ENCODE measurements at regions of chr6 and their contacts with region 1.

Region 1: GRCh38 chr6:125956506-125957390 is at the start of gene HINT3:
- DNase-seq: peak; percentile 96 to 98
- H3K4me3 ChIP-seq: peak within 1 kb of the TSS; percentile 99
- H3K4me3 Mint-ChIP-seq: no peak within 1 kb of the TSS
- H3K27ac Mint-ChIP-seq: peak within 1 kb of the TSS; percentile 59
- H3K4me1 ChIP-seq: peaks cover 7% of the 10 kb centered on the region
- H3K4me1 Mint-ChIP-seq: peaks cover 14% of the 10 kb centered on the region
- H3K27me3 ChIP-seq: no peaks in the 10 kb centered on the region
- H3K27me3 Mint-ChIP-seq: no peaks in the 10 kb centered on the region
- CTCF ChIP-seq: peak; percentile 93 to 95
- total RNA-seq, gene HINT3: 20.2 and 24.6 TPM in 2 replicates

Region 2: DNA sequence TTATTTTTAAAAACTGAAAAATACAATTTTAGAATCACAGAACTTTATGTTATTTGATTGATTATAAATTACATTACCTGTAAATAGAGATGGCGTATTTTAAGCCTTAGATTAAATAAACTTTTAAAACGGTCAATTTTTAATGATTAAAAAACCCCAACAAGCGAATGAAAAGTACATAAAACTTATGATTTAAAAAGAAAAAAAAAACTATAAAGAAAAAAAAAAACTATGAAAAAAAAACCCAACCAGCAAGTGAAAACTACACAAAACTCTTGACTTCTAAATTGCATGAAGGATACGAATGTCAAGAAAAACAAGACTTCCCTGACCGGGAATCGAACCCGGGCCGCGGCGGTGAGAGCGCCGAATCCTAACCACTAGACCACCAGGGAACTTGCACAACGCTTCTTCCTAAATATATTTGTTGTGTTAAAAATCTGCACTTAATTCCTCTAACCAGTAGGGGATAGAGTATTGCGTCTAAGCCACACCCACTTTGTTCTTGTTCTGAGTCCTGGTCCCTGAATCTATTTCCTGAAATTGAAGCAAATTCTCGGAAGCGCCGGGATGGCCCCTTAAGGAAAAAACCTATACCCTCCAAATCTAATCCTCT is 176.7 kb before region 1 on chr6:
- CTCF ChIA-PET with region 1: interaction called, 14 read pairs
- POLR2A ChIA-PET with region 1: interaction called, 4 read pairs
- intact Hi-C with region 1: loop called (anchors 1 kb)
- DNase-seq: peak; percentile 75 to 90
- H3K4me3 ChIP-seq: peak overlapping the region; percentile 61
- H3K4me3 Mint-ChIP-seq: no peak overlapping the region
- H3K27ac Mint-ChIP-seq: no peak overlapping the region
- H3K4me1 ChIP-seq: peaks cover 13% of the 10 kb centered on the region
- H3K4me1 Mint-ChIP-seq: peaks cover 14% of the 10 kb centered on the region
- H3K27me3 ChIP-seq: no peaks in the 10 kb centered on the region
- H3K27me3 Mint-ChIP-seq: no peaks in the 10 kb centered on the region
- CTCF ChIP-seq: peak; percentile 6 to 13

Region 3: GRCh38 chr6:125858427-125859320 is 98.1 kb before region 1 on chr6:
- CTCF ChIA-PET with region 1: interaction called, 11 read pairs
- POLR2A ChIA-PET with region 1: no interaction called
- intact Hi-C with region 1: loop called (anchors 5 kb)
- DNase-seq: peak; percentile 81 to 82
- H3K4me3 ChIP-seq: no peak overlapping the region
- H3K4me3 Mint-ChIP-seq: no peak overlapping the region
- H3K27ac Mint-ChIP-seq: peak overlapping the region; percentile 69
- H3K4me1 ChIP-seq: peaks cover 13% of the 10 kb centered on the region
- H3K4me1 Mint-ChIP-seq: peaks cover 18% of the 10 kb centered on the region
- H3K27me3 ChIP-seq: no peaks in the 10 kb centered on the region
- H3K27me3 Mint-ChIP-seq: no peaks in the 10 kb centered on the region
- CTCF ChIP-seq: peak; percentile 64 to 95

Region 4: GRCh38 chr6:125918681-125919566 is 37.8 kb before region 1 on chr6:
- CTCF ChIA-PET with region 1: interaction called, 11 read pairs
- POLR2A ChIA-PET with region 1: interaction called, 5 read pairs
- intact Hi-C with region 1: loop called (anchors 2 kb)
- DNase-seq: peak; percentile 73
- H3K4me3 ChIP-seq: peak overlapping the region; percentile 37
- H3K4me3 Mint-ChIP-seq: peak overlapping the region; percentile 73
- H3K27ac Mint-ChIP-seq: peak overlapping the region; percentile 92
- H3K4me1 ChIP-seq: peaks cover 47% of the 10 kb centered on the region
- H3K4me1 Mint-ChIP-seq: peaks cover 59% of the 10 kb centered on the region
- H3K27me3 ChIP-seq: no peaks in the 10 kb centered on the region
- H3K27me3 Mint-ChIP-seq: no peaks in the 10 kb centered on the region
- CTCF ChIP-seq: no peak

Region 5: GRCh38 chr6:125974214-125974866 is 17.6 kb after region 1 on chr6:
- CTCF ChIA-PET with region 1: interaction called, 4 read pairs
- POLR2A ChIA-PET with region 1: no interaction called
- intact Hi-C with region 1: loop called (anchors 1 kb)
- DNase-seq: peak in 1 of 2 experiments; percentile 41
- H3K4me3 ChIP-seq: no peak overlapping the region
- H3K4me3 Mint-ChIP-seq: no peak overlapping the region
- H3K27ac Mint-ChIP-seq: no peak overlapping the region
- H3K4me1 ChIP-seq: no peaks in the 10 kb centered on the region
- H3K4me1 Mint-ChIP-seq: no peaks in the 10 kb centered on the region
- H3K27me3 ChIP-seq: no peaks in the 10 kb centered on the region
- H3K27me3 Mint-ChIP-seq: no peaks in the 10 kb centered on the region
- CTCF ChIP-seq: peak; percentile 41 to 44

Region 6: DNA sequence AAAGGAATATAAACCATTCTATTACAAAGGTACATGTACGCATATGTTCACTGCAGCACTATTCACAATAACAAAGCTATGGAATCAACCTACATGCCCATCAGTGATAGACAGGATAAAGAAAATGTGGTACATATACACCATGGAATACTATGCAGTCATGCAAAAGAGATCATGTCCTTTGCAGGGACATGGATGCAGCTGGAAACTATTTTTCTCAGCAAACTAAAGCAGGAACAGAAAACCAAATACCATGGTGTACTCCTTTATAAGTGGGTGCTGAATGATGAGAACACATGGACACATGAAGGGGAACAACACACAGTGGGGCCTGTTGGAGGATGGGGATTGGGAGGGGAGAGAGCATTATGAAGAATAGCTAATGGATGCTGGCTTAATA is 278.6 kb after region 1 on chr6:
- CTCF ChIA-PET with region 1: no interaction called
- POLR2A ChIA-PET with region 1: no interaction called
- intact Hi-C with region 1: no loop called
- DNase-seq: no peak
- H3K4me3 ChIP-seq: no peak overlapping the region
- H3K4me3 Mint-ChIP-seq: no peak overlapping the region
- H3K27ac Mint-ChIP-seq: no peak overlapping the region
- H3K4me1 ChIP-seq: no peaks in the 10 kb centered on the region
- H3K4me1 Mint-ChIP-seq: no peaks in the 10 kb centered on the region
- H3K27me3 ChIP-seq: no peaks in the 10 kb centered on the region
- H3K27me3 Mint-ChIP-seq: no peaks in the 10 kb centered on the region
- CTCF ChIP-seq: no peak